CD4-positive, alpha-beta memory T cell (primary cell): ENCODE measurements at regions of chr1 and their contacts with region 1.

Region 1: GRCh38 chr1:58816072-58816746 is 32.4 kb upstream of the JUN start:
- DNase-seq: peak; percentile 72 to 85 (median 77)
- H3K4me3 ChIP-seq: peak overlapping the region; percentile 75 to 85
- H3K4me3 Mint-ChIP-seq: peak overlapping the region; percentile 89 to 96 (median 93)
- H3K27ac ChIP-seq: peak overlapping the region; percentile 76
- H3K27ac Mint-ChIP-seq: peak overlapping the region; percentile 92 to 96 (median 95)
- H3K4me1 ChIP-seq: peaks cover 51% of the 10 kb centered on the region
- H3K4me1 Mint-ChIP-seq: peaks cover 34 to 55% (median 41%) of the 10 kb centered on the region in 4 donors
- H3K27me3 ChIP-seq: no peaks in the 10 kb centered on the region
- H3K27me3 Mint-ChIP-seq: no peaks in the 10 kb centered on the region

Region 2: DNA sequence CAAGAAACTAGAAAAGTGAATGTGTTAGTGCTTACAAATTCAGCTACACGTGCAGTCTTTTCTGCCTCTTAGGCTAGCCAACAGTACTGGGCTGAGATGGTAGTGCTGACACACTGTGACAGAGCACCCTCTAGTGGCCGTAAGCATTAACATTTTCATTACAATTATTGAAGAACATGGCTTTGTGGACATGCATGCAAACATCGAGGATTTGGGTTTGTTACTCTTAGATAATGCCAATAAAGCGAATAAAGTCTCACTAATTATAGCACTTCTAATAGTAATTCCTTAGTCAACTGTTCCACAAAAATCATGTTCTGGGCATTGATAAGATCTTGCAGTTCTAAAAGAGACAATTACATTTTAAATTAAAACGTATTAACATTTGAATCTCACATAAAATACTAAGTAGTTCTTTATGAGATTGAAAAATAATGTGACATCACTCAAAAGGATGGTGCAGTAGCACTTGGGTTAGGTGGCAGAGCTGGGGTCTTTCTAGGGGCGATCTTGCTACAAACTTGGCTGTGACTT is 163.5 kb before region 1 on chr1:
- CTCF ChIA-PET with region 1: no interaction called
- POLR2A ChIA-PET with region 1: no interaction called
- intact Hi-C with region 1: no loop called
- DNase-seq: peak; percentile 43 to 63 (median 60)
- H3K4me3 ChIP-seq: no peak overlapping the region
- H3K4me3 Mint-ChIP-seq: no peak overlapping the region
- H3K27ac ChIP-seq: no peak overlapping the region
- H3K27ac Mint-ChIP-seq: peak overlapping the region in 1 of 7 donors; percentile 32
- H3K4me1 ChIP-seq: peaks cover 14% of the 10 kb centered on the region
- H3K4me1 Mint-ChIP-seq: peaks cover 11 to 29% (median 15%) of the 10 kb centered on the region in 4 donors
- H3K27me3 ChIP-seq: no peaks in the 10 kb centered on the region
- H3K27me3 Mint-ChIP-seq: no peaks in the 10 kb centered on the region

Region 3: DNA sequence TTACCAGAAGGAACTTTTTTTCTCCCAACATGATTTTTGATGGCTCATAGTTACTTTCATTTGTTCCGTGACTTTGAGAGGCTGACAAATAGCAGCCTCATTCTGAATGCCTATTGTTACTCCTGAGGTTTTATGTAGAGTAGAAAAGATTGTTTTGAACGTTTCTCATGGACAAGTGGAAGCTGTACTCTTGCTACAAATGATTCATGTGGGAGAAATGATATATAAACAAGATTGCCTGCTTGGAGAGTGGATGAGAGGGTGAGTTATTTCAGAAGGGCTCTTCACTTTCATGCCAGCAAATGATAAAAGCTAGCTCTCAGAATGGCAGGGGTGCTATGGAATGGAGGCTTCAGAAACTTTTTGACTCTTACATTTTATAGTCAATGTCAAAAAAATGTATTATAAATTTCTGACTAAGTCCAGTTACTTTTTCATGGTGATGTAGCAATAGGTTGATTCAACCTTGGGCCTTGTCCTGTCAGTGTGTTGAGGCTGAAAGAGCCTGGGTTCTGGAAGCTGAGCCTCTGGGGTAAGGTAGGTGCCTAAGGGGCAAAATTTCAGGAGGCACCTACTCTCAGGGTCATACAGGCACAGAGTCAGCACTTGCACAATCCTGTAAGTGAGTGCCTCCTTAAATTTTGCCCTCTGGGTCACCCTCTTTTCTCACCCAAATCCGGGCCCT is 51.8 kb before region 1 on chr1:
- CTCF ChIA-PET with region 1: no interaction called
- POLR2A ChIA-PET with region 1: no interaction called
- intact Hi-C with region 1: no loop called
- DNase-seq: no peak
- H3K4me3 ChIP-seq: no peak overlapping the region
- H3K4me3 Mint-ChIP-seq: no peak overlapping the region
- H3K27ac ChIP-seq: no peak overlapping the region
- H3K27ac Mint-ChIP-seq: no peak overlapping the region
- H3K4me1 ChIP-seq: no peaks in the 10 kb centered on the region
- H3K4me1 Mint-ChIP-seq: no peaks in the 10 kb centered on the region
- H3K27me3 ChIP-seq: no peaks in the 10 kb centered on the region
- H3K27me3 Mint-ChIP-seq: peaks cover 2 to 4% of the 10 kb centered on the region in 2 donors

Region 4: GRCh38 chr1:58848818-58849411 is 32.7 kb after region 1 on chr1:
- CTCF ChIA-PET with region 1: no interaction called
- POLR2A ChIA-PET with region 1: no interaction called
- intact Hi-C with region 1: no loop called
- DNase-seq: no peak
- H3K4me3 ChIP-seq: no peak overlapping the region
- H3K4me3 Mint-ChIP-seq: no peak overlapping the region
- H3K27ac ChIP-seq: no peak overlapping the region
- H3K27ac Mint-ChIP-seq: no peak overlapping the region
- H3K4me1 ChIP-seq: no peaks in the 10 kb centered on the region
- H3K4me1 Mint-ChIP-seq: no peaks in the 10 kb centered on the region
- H3K27me3 ChIP-seq: no peaks in the 10 kb centered on the region
- H3K27me3 Mint-ChIP-seq: no peaks in the 10 kb centered on the region

Region 5: GRCh38 chr1:59296358-59297256 is 480.4 kb after region 1 on chr1 and contains the start of gene FGGY:
- CTCF ChIA-PET with region 1: no interaction called
- POLR2A ChIA-PET with region 1: interaction called, 4 read pairs
- intact Hi-C with region 1: loop called (anchors 10 kb)
- DNase-seq: peak; percentile 81 to 90 (median 82)
- H3K4me3 ChIP-seq: peak within 1 kb of the TSS; percentile 62 to 73
- H3K4me3 Mint-ChIP-seq: peak within 1 kb of the TSS; percentile 82 to 94 (median 91)
- H3K27ac ChIP-seq: peak within 1 kb of the TSS; percentile 69
- H3K27ac Mint-ChIP-seq: peak within 1 kb of the TSS; percentile 85 to 96 (median 95)
- H3K4me1 ChIP-seq: peaks cover 18% of the 10 kb centered on the region
- H3K4me1 Mint-ChIP-seq: peaks cover 4 to 25% (median 18%) of the 10 kb centered on the region in 4 donors
- H3K27me3 ChIP-seq: no peaks in the 10 kb centered on the region
- H3K27me3 Mint-ChIP-seq: no peaks in the 10 kb centered on the region
- total RNA-seq, gene FGGY: 5.3 to 8.8 TPM